ENCODE measurements at regions of chr7 and their contacts with region 1.

Region 1: GRCh38 chr7:132249614-132249972 is 326.7 kb downstream of the PLXNA4 start:
- DNase-seq: peak; percentile 56
- ATAC-seq: peak; percentile 62

Region 2: GRCh38 chr7:131945313-131945911 is 304.2 kb before region 1 on chr7:
- intact Hi-C with region 1: loop called (anchors 5 kb)
- DNase-seq: no peak
- ATAC-seq: peak; percentile 14

Region 3: DNA sequence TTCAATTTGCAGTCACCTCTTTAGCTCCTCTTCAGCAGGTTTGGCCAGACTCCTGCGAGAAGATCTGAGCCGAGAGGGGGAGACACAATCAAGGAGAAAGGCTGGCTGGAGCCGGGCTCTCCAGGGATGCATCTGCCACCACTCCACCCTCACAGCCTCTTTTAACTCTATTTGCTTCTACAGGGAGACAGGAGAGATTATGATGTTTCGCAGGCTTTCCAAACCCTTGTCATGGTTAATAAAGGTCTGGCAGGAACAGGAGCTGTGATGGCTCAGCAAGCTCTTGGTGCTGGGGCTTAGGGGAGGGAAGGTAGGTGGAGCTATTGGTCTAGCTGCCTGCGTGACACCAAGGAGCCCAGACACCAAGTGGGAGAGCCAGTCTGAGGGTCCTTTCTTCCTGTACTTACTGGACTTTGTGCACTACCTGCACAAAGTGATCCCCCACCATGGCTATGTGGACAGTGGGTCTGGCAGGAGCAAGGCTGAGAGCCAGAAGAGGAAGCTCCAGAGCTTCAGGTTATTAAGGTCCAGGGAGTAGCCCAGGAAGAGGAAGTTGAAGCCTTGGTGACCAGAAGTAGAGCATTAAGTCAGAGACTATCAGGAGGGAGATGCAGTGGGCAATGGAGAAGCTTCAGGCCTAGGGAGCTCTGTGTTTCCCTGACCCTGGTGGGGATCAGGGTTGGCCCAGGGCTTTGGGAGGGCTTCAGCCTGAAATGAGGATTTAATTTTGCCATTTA is 244.9 kb before region 1 on chr7:
- intact Hi-C with region 1: loop called (anchors 2 kb)
- DNase-seq: no peak
- ATAC-seq: peak; percentile 74

Region 4: DNA sequence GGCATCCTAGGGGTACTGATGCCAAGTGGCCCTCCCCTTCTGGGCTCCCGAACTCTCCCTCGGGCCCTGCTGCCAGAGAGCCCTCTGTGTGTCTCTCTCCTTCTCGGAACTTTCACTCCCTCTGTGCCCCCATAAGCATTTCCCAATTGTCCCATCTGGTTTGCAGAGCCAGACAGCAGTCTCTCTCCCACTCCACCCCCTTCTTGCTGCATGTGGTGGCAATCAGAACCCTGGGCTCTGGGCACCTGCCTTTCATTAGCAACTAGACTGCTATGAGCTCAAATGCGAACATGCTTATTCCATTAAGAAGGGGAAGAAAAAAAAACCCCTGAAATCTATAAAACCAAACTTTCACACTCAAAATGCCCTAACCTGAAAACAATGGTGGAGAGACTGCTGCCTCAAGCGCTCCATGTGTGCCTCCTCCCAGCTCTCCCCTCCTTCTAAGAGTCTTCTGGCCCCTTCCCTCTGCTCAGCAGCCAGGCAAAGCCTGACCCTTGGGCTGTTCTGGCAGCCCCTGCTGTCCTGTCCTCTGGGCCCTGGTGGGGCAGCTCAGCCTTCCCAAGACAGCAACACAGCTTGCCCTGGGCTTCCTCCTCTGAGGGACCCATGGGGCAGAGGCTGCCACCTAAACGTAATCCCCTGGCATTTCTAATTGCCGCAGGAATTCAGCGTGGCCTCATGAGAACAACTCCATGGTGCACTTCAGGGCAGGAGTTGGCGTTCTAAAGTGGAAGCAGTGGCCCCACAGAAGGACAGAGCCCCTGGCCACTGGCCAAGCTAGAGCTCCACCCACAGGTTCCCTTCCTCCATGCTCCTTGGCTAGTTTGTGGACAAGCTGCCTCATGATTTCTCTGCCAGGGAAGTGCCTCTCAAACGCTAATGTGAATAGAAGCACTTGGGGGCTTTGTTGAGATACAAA is 88.7 kb before region 1 on chr7:
- intact Hi-C with region 1: loop called (anchors 5 kb)
- DNase-seq: peak; percentile 78
- ATAC-seq: peak; percentile 74

Region 5: DNA sequence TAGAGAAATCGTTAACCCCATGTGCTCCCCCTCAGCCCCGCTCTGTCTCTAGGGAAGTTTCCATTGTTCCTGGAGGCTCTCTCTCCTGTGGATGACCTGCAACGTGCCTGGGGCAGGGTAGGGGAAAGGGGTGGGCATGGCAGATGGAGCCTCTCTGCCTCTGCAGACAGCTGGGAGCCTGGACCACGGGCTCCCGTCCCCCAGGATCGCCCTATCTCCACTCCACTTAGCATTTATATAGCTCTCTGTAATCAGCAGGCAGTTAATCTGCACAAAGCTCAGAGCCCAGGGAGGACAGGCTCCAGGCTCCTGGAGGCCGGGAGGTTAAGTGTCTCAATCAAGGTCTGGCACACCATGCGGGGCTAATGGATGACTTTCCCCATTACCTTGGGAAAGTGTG is 43.0 kb before region 1 on chr7:
- intact Hi-C with region 1: loop called (anchors 5 kb)
- DNase-seq: no peak
- ATAC-seq: peak; percentile 47